PC-9 (cell line): ENCODE measurements at regions of chr7 and their contacts with region 1.

Region 1: DNA sequence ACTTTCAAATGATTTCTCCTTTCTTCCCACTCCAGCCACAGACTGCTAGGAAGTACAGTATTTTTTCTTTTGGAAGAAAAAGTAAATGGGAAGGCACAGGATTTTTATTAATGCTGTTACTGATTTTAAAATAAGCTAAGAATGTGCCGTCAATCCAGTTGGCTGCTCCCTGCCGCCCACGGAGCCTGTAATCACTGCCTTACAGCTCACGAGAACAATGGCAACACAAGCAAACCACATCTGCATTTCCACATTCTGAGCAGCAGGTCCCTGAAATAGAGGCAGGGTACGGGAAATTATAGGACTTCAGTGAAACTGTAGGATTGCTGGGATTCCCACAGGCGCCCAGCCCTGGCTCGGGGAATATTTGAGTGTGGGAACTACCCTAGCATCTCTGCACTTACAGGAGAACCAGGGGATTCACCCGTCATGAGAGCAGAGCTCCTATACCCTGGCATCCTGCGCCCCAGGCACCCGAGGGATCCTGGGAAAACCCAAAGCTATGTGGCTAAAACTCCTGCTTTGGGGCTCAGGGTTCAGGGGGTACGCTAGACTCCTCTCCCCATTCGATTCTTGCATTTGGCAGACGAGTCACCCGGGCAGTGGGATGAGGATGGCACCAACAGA is 72.9 kb upstream of the TNS3 start:
- DNase-seq: no peak
- H3K4me3 ChIP-seq: no peak overlapping the region
- H3K27ac ChIP-seq: peak overlapping the region; percentile 98
- H3K4me1 ChIP-seq: peaks cover 52% of the 10 kb centered on the region
- H3K27me3 ChIP-seq: no peaks in the 10 kb centered on the region
- CTCF ChIP-seq: no peak

Region 2: DNA sequence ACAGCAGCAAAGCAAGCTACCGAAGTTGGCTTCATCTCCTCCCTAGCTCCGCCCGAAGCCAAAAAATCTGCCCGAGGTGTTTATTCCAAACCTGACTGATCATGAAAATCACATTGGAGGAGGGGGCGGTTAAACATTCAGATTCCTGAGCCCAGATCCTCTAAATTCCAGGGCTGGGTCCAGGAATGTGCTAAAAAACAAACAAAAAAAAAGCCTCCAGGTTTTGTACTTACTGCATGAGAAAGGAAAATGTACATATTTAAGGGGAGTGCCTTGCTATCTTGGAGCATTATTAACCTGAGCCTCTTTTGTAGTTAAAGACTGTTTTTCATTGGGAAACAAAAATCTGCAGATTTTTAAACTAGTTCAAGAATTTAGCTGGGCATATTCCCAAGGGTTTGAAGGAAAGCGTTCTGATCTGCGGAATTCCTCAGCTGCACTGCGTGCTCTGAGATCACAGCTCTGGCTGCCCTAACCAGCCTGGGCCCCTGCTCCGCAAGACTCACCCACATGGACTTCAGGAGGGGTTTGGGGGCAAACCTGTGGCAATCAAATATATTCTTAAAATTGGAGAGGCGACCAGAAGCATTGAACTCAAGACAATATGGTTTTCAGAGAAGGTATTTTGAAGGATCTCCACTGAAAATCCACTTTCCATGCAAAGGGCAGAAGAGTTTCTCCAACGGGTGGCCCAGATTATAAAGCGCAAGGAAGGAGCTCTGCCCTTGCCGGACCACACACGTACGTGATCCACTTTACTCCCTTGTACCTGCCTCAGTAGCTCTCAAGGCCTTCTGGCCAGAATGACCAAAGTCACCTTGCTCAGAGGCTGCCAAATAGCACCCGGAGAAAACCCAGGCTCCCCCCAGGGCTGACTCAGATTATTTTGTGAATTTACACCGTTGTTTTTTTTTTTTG is 62.9 kb before region 1 on chr7:
- CTCF ChIA-PET with region 1: no interaction called
- POLR2A ChIA-PET with region 1: no interaction called
- intact Hi-C with region 1: no loop called
- DNase-seq: peak; percentile 75 to 89
- H3K4me3 ChIP-seq: 0 out of 2 replicates have a peak overlapping the region, but pooled peaks have one; percentile 6
- H3K27ac ChIP-seq: peak overlapping the region; percentile 79
- H3K4me1 ChIP-seq: peaks cover 59% of the 10 kb centered on the region
- H3K27me3 ChIP-seq: no peaks in the 10 kb centered on the region
- CTCF ChIP-seq: no peak

Region 3: GRCh38 chr7:47677667-47678111 is 22.9 kb after region 1 on chr7:
- CTCF ChIA-PET with region 1: interaction called, 10 read pairs
- POLR2A ChIA-PET with region 1: no interaction called
- intact Hi-C with region 1: no loop called
- DNase-seq: peak; percentile 28 to 99
- H3K4me3 ChIP-seq: no peak overlapping the region
- H3K27ac ChIP-seq: peak overlapping the region; percentile 88
- H3K4me1 ChIP-seq: peaks cover 58% of the 10 kb centered on the region
- H3K27me3 ChIP-seq: no peaks in the 10 kb centered on the region
- CTCF ChIP-seq: no peak